ENCODE measurements at regions of chr1 and their contacts with region 1.

Region 1: DNA sequence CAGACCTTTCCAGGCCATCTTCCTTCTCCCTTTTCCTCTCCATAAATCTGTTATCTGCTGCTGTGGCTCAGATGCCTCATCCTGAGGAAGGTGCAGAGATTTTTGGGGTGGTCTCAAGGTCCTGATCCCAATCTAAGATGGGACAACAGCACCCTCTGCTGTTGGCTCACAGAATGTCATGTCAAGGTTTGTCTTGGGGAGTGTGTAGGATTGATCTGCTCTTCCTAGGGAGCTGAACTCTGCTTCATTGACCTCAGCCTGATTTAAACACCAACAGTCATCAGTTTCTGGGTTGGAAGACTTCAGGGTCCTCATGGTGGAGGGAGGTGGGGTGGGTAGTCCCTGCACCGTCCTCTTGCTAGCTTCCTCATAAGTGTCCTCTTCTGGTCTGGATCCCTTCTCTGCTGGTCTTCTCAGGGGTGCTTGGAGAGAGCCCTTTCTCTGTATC is 62.8 kb upstream of the LAX1 start:
- DNase-seq: peak; percentile 72
- H3K4me3 Mint-ChIP-seq: no peak overlapping the region
- H3K27ac Mint-ChIP-seq: peak overlapping the region; percentile 78
- H3K4me1 Mint-ChIP-seq: peaks cover 23% of the 10 kb centered on the region
- H3K27me3 Mint-ChIP-seq: no peaks in the 10 kb centered on the region

Region 2: GRCh38 chr1:203504397-203505250 is 197.5 kb before region 1 on chr1:
- CTCF ChIA-PET with region 1: interaction called, 132 read pairs
- DNase-seq: peak; percentile 85
- H3K4me3 Mint-ChIP-seq: no peak overlapping the region
- H3K27ac Mint-ChIP-seq: no peak overlapping the region
- H3K4me1 Mint-ChIP-seq: no peaks in the 10 kb centered on the region
- H3K27me3 Mint-ChIP-seq: peaks cover 29% of the 10 kb centered on the region

Region 3: DNA sequence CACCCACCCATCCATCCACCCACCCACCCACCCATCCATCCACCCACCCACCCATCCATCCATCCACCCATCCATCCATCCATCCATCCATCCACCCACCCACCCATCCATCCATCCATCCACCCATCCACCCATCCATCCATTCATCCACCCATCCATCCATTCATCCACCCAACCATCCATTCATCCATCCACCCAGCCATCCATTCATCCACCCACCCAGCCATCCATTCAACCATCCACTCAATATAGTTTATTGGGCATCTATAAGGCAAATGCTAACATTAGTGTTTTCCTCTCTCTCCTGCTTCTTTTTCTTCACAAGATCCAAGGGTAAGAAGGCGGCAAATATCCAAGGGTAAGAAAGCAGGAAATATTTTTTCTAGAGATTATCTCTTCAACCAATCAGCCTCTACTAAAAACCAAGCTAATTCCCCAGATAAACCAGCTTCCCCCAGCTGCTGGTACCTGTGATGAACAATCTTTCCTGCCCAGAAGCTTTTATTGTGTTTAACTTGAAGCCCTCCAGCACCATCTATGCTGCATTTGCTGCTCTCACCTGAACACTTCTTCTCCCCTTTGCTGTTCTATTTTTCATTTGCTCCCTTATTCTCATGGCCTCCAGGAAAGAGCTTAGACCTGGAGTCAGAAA is 98.1 kb before region 1 on chr1:
- CTCF ChIA-PET with region 1: interaction called, 29 read pairs
- DNase-seq: no peak
- H3K4me3 Mint-ChIP-seq: no peak overlapping the region
- H3K27ac Mint-ChIP-seq: peak overlapping the region; percentile 5
- H3K4me1 Mint-ChIP-seq: peaks cover 46% of the 10 kb centered on the region
- H3K27me3 Mint-ChIP-seq: peaks cover 4% of the 10 kb centered on the region

Region 4: GRCh38 chr1:203625628-203626019 is 76.5 kb before region 1 on chr1:
- CTCF ChIA-PET with region 1: interaction called, 80 read pairs
- DNase-seq: peak; percentile 76
- H3K4me3 Mint-ChIP-seq: peak overlapping the region; percentile 96
- H3K27ac Mint-ChIP-seq: peak overlapping the region; percentile 95
- H3K4me1 Mint-ChIP-seq: peaks cover 64% of the 10 kb centered on the region
- H3K27me3 Mint-ChIP-seq: no peaks in the 10 kb centered on the region

Region 5: DNA sequence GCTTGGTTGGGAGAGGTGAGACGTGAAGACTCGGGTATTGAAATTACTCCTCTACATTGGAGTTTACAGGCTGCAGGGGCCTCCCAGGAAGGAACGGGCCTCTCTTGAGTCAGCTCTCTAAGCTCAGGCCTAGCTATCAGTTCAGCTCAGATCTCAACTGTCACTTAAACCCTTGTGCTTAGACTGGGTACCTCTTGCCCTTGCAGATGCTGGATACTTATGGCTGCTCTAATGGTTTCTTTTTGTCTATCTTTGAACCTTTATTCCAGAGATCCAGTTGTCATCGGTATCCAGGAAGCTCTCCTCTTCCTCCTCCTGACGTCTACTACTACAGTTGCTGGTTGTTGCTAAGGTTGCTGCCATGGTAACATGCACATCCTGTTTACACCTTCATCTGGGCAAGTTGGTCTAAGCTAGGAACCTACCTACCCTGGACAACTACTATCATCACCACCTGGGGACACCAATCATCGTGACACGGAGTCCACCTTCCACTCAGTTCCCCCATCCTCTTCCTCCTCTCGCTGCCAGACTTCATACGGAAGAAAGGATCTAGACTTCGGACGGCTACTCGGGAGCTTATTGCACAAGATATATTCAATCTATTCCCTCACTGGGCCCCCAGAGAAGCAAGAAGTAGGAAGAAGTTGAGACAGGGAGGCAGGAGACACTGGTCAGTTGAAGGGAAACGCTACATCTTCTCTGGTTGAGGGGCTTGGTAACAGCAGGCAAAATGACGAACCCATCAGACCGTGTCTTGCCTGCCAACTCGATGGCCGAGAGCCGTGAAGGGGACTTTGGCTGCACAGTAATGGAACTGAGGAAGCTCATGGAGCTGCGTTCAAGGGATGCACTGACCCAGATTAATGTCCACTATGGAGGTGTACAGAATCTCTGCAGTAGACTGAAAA is 19.4 kb before region 1 on chr1:
- CTCF ChIA-PET with region 1: interaction called, 14 read pairs
- DNase-seq: peak; percentile 82
- H3K4me3 Mint-ChIP-seq: peak overlapping the region; percentile 1
- H3K27ac Mint-ChIP-seq: peak overlapping the region; percentile 78
- H3K4me1 Mint-ChIP-seq: peaks cover 44% of the 10 kb centered on the region
- H3K27me3 Mint-ChIP-seq: no peaks in the 10 kb centered on the region

Region 6: DNA sequence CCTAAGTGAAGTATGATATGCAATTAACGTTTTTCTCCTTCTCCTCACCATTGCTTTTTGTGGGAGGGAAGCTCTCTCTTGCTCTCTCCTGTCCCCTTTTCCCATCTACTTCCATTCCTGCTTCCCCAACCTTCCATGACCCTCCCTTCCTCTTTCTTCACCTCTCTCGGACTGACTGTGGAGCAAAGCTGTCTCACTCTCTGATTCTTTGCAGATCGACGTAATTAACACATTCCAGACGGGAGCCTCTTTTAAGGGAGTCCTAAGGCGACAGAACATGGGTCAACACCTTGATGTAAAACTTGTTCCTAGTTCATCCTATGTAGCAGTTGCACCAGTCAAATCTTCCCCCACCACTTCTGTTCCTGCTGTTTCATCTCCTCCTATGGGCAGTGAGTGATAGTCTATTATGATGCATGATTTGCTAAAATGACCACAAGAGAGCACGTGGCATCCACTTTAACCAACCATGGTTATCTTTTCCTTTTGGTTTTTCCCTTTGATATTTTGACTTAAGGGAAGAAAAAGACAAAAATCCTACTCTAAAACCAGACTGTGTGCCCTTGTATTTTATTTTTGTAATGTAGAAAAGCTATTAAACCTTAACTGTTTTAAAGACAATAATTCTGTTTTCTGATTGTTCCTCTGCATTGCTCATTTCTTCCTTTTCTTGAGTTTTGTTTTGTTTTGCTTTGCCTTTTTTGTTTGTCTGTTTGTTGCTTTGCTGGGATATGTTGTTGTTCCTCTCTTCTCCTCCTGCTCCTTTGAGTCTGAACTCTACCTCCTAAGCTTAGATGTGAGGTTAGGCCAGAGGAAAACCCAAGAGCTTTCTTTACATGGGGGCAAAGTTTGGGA is 31.1 kb after region 1 on chr1:
- CTCF ChIA-PET with region 1: no interaction called
- DNase-seq: no peak
- H3K4me3 Mint-ChIP-seq: no peak overlapping the region
- H3K27ac Mint-ChIP-seq: no peak overlapping the region
- H3K4me1 Mint-ChIP-seq: no peaks in the 10 kb centered on the region
- H3K27me3 Mint-ChIP-seq: no peaks in the 10 kb centered on the region

Region 7: DNA sequence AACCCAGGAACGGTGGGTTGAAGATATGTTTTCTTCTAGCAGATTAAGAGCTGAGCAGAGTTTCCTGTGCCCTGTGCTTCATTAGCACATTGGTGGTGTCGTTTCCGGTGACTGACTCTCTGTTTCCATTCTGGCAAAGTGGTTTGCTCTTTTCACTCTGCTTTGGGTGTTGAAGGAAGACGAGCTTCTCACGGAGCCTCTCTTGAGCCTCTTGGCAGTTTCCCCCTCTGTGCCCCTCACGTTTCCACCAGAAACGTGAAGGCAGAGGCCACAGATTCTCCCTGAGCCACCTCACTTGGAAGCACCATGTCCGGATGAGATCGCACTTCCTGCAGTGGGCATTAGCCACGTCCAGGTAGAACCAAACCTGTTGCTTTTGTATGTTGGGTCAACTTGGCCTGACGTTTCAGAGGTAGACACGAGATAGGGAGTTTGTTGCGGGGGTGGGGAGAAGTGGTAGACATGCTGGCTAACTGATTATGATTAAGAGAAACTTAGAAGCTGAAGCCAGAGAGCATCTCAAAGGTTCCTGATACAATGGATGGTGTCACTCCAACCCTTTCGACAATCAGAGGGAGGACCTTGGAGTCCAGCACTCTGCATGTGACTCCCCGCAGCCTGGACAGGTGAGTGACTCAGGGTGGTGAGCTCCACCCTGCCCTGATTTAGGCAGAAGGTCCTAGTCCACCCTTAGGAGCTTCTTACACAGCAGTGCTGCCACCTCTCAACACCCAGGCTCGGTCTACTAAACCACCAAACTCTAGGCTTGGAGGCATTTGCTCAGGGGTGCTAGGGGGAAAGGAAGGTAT is 63.1 kb after region 1 on chr1 and contains the start of gene LAX1:
- CTCF ChIA-PET with region 1: interaction called, 10 read pairs
- DNase-seq: peak; percentile 84
- H3K4me3 Mint-ChIP-seq: peak within 1 kb of the TSS; percentile 89
- H3K27ac Mint-ChIP-seq: peak within 1 kb of the TSS; percentile 98
- H3K4me1 Mint-ChIP-seq: peaks cover 51% of the 10 kb centered on the region
- H3K27me3 Mint-ChIP-seq: no peaks in the 10 kb centered on the region

Region 8: DNA sequence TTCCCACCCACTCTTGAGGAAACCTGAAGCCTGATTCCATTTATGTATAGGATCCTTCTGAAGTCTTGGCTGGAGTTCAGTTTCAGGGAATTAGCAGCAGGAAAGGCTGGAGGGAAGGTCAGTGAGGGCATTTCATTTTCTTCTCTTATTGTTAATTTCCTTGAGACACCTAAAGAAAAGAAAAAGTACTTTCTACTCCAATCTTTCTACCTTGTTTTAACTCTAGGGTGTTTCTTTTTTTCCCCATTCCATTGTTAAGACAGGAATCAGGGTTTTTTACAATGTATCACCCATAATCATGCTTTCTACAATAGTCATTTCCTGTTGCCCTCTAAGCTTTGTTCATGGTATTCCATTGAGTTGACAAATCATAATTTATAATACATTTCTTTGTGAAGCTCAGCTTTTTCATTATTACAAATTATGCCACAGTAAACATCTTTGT is 186.7 kb after region 1 on chr1:
- CTCF ChIA-PET with region 1: no interaction called
- DNase-seq: no peak
- H3K4me3 Mint-ChIP-seq: no peak overlapping the region
- H3K27ac Mint-ChIP-seq: no peak overlapping the region
- H3K4me1 Mint-ChIP-seq: no peaks in the 10 kb centered on the region
- H3K27me3 Mint-ChIP-seq: no peaks in the 10 kb centered on the region

Measured in activated naive CD4-positive, alpha-beta T cell treated with anti-CD3 and anti-CD28 coated beads, Interleukin-2, amount 10 ng/mL, durations not matched to agents 7 days and 5 days (primary cell).